ENCODE measurements at regions of chr1 and their contacts with region 1.

Region 1: DNA sequence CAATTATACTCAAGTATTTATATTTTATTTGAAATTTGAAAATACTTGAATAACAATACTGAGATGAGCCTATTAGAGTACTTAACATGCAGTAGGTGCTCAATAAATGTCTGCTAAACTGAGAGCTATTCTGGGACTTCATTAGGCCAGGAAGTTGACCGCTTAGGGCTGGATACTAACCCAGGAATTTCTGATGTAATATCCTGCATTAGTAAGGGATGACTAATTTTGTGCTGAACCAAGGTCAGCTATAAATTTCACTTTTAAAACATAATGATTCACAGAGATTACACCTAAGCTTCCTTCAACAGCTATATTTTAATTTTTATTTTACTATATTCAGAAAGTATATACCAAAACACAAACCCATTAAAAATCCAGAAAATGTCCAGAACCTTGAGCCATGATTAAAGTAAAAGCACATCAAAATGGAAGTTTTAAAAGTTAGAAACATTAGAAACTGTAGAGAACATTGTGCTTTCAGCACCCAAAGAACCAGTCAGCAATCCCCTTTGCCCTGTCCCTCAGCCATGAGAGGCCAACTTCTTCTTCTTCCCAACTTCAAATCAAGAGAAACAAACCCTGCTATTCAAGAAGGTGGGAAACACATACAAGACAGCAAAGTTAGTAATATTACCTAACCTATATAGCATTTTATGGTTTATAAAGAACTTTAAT is 35.4 kb downstream of the WNT2B start:
- DNase-seq: no peak
- H3K4me3 ChIP-seq: no peak overlapping the region
- H3K27ac ChIP-seq: peak overlapping the region in 1 of 2 donors; percentile 2
- H3K4me1 ChIP-seq: no peaks in the 10 kb centered on the region
- H3K27me3 ChIP-seq: no peaks in the 10 kb centered on the region
- CTCF ChIP-seq: no peak
- EP300 ChIP-seq: no peak
- POLR2A ChIP-seq: no peak

Region 2: GRCh38 chr1:112496290-112496689 is 47.9 kb before region 1 on chr1:
- intact Hi-C with region 1: loop called in 1 of 4 experiments (anchors 10 kb)
- DNase-seq: no peak
- H3K4me3 ChIP-seq: no peak overlapping the region
- H3K27ac ChIP-seq: no peak overlapping the region
- H3K4me1 ChIP-seq: no peaks in the 10 kb centered on the region
- H3K27me3 ChIP-seq: no peaks in the 10 kb centered on the region
- CTCF ChIP-seq: no peak
- EP300 ChIP-seq: no peak
- POLR2A ChIP-seq: no peak

Region 3: DNA sequence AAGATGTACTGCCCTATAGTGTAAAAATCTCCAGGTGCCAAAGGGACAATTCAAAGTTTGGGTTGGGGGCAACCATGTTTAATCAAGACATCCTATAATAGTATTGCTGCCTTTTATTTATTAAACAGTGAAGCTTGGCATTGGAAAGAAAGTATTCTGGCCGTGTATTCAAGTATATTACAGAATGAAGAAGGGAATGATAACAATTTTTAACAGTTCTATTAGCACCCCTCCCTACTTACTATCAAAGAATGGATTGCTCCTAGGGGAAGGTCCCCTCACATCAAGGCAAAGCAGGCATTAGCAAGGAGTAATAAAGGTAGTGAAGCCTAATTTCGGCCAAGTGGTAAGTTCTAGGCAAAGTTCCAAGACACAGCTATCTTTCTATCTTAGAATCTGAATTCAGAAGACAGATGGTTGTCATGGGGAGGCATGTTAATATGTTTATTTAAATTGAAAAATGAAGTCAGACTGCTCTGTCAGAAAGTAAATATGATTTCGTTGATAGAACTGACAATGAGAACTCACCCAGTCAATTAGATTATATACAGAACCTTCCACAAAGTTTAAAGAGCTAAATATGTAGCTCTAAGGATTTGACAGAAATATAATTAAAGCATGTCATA is 50.2 kb after region 1 on chr1:
- intact Hi-C with region 1: no loop called
- DNase-seq: no peak
- H3K4me3 ChIP-seq: no peak overlapping the region
- H3K27ac ChIP-seq: no peak overlapping the region
- H3K4me1 ChIP-seq: no peaks in the 10 kb centered on the region
- H3K27me3 ChIP-seq: no peaks in the 10 kb centered on the region
- CTCF ChIP-seq: no peak
- EP300 ChIP-seq: no peak
- POLR2A ChIP-seq: no peak

Region 4: GRCh38 chr1:112923234-112923955 is 379.2 kb after region 1 on chr1:
- intact Hi-C with region 1: no loop called
- DNase-seq: no peak
- H3K4me3 ChIP-seq: no peak overlapping the region
- H3K27ac ChIP-seq: no peak overlapping the region
- H3K4me1 ChIP-seq: no peaks in the 10 kb centered on the region
- H3K27me3 ChIP-seq: no peaks in the 10 kb centered on the region
- CTCF ChIP-seq: no peak
- EP300 ChIP-seq: no peak
- POLR2A ChIP-seq: no peak

Region 5: DNA sequence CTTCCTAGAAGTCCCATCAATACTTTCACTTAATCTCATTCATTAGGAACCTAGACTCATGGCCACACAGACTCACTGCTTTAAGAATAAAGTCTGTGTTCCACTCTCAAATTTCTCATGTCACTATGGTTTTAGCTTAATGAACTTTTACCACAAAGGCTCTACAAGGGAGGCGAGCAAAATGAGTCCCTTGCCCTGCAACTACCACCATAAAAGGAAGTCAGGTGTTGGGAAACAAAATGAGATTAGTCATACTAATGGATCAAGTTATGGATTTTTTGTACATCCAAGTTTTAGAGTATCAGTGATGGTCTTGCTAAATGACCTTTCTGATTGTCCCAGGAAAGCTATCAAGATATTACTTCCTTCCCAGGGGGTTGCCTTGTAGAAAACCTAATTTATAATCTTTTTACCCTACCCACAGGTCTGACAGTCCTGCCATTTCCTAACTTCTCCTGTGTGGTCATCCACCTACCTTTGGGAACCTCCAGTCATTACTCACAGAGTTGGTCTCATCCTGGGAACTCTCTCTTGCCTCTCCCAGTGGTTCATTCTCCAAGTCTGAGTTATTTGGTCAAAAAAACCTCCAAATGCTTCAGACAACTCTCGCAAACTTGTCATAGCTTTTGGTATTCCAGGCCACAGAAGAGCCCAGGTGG is 463.7 kb after region 1 on chr1:
- intact Hi-C with region 1: no loop called
- DNase-seq: no peak
- H3K4me3 ChIP-seq: no peak overlapping the region
- H3K27ac ChIP-seq: no peak overlapping the region
- H3K4me1 ChIP-seq: no peaks in the 10 kb centered on the region
- H3K27me3 ChIP-seq: no peaks in the 10 kb centered on the region
- CTCF ChIP-seq: no peak
- EP300 ChIP-seq: no peak
- POLR2A ChIP-seq: no peak

Measured in ovary (tissue), 10 donors.